Activated CD4-positive, alpha-beta T cell treated with anti-CD3 and anti-CD28 coated beads for 36 hours (primary cell): ENCODE measurements at regions of chr2 and their contacts with region 1.

Region 1: DNA sequence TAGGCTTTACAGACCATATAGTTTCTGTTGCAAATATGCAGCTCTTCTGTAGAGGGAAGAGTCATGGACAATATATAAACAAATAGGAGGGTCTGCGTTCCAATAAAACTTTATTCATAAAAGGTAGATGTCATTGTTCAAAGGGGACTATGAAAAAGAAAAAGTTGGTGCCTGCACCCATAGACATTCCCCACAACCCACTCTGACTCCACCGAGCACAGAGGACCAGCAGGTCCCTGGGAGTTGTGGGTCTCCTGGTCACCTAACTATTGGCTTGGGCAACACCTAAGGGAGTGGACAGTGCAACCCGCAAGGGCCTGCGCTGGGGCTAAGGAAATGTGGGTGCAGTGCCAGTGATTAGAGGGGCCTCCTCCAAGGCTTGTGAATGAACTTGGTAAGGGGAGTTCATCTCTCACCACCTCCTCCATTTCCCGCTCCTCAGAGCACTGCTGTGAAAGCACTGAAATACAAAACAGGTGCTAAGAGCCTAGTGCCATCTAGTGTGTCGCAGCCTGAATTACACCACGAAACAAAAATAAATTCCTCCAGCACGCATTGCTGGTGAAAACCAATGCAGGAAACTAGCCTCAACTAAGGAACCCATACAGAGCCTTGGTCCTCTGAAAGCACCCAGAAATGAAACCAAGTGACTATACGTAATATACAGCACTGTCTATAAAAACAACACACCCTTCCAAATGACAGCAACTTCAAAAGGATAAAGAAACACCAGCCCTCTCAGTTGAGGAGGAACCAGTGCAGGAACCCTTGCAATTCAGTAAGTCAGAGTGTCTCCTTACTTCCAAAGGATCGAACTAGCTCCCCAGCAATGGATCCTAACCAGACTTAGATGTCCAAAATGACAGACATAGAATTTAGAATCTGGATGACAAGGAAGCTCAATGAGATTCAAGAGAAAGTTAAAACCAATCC is 166.6 kb downstream of the RNF144A start:
- DNase-seq: peak; percentile 42
- ATAC-seq: peak; percentile 60
- H3K4me3 Mint-ChIP-seq: no peak overlapping the region
- H3K27ac Mint-ChIP-seq: no peak overlapping the region
- H3K4me1 Mint-ChIP-seq: no peaks in the 10 kb centered on the region
- H3K27me3 Mint-ChIP-seq: no peaks in the 10 kb centered on the region

Region 2: GRCh38 chr2:6826081-6826913 is 257.5 kb before region 1 on chr2:
- CTCF ChIA-PET with region 1: interaction called, 3 read pairs
- POLR2A ChIA-PET with region 1: no interaction called
- intact Hi-C with region 1: loop called (anchors 1 kb)
- DNase-seq: peak; percentile 78
- ATAC-seq: peak; percentile 97
- H3K4me3 Mint-ChIP-seq: no peak overlapping the region
- H3K27ac Mint-ChIP-seq: no peak overlapping the region
- H3K4me1 Mint-ChIP-seq: peaks cover 9% of the 10 kb centered on the region
- H3K27me3 Mint-ChIP-seq: no peaks in the 10 kb centered on the region

Region 3: DNA sequence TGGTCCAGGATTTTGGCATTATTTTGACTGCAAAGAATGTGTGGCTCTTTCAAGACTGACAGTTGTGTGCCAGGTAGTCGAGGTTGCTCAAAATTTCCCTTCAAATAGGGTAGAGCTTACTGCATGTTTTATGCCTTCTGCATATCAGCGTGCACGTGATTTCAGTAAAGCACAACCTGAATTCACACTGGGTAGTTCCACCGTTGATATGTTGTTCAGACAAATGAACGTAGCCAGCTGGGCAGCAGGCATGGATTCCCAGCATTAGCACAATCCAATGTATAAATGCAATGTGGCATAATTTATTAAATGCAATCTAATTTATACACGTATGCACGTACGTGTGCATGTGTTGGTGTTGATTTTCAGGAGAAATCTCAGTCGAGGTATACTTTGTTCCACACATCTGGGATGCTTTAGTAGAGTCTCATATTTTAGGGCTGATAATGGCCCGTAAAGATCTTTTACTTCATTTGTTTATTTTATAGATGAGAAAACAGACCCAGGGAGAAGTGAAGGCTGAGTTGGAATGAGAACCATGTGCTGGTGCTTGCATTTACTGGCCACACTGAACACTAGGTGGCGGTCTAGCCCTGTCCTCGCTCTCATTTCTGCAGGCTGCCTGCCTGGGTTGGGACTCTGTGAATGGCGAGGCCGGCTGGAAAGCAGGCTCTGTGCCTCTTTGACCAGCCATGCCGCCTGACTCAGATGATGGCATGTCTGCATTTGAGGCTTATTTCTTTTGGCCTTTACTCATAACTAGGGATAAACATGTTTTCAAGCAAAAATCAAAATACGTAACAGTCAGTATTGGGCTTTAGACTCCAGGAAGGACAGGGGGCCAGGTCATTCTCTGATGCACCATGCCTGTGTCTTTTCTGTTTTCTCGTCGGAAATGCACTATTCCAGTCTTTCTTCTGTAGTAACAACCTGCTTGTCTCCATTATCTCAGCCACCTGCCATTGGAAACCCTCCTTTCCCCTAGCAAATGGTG is 46.2 kb before region 1 on chr2:
- CTCF ChIA-PET with region 1: interaction called, 5 read pairs
- POLR2A ChIA-PET with region 1: no interaction called
- intact Hi-C with region 1: loop called in 1 of 2 experiments (anchors 1 kb)
- DNase-seq: peak; percentile 74
- ATAC-seq: peak; percentile 84
- H3K4me3 Mint-ChIP-seq: no peak overlapping the region
- H3K27ac Mint-ChIP-seq: no peak overlapping the region
- H3K4me1 Mint-ChIP-seq: no peaks in the 10 kb centered on the region
- H3K27me3 Mint-ChIP-seq: no peaks in the 10 kb centered on the region